CD4-positive, alpha-beta memory T cell (primary cell): ENCODE measurements at regions of chr10 and their contacts with region 1.

Region 1: GRCh38 chr10:102641880-102642735 is 2.2 kb upstream of the TRIM8 start:
- DNase-seq: peak; percentile 91 to 99 (median 95)
- H3K4me3 ChIP-seq: peak overlapping the region; percentile 26 to 78
- H3K4me3 Mint-ChIP-seq: peak overlapping the region; percentile 90 to 97 (median 94)
- H3K27ac ChIP-seq: peak overlapping the region; percentile 94
- H3K27ac Mint-ChIP-seq: peak overlapping the region; percentile 96 to 99 (median 98)
- H3K4me1 ChIP-seq: peaks cover 14% of the 10 kb centered on the region
- H3K4me1 Mint-ChIP-seq: peaks cover 13 to 39% (median 18%) of the 10 kb centered on the region in 4 donors
- H3K27me3 ChIP-seq: no peaks in the 10 kb centered on the region
- H3K27me3 Mint-ChIP-seq: no peaks in the 10 kb centered on the region

Region 2: DNA sequence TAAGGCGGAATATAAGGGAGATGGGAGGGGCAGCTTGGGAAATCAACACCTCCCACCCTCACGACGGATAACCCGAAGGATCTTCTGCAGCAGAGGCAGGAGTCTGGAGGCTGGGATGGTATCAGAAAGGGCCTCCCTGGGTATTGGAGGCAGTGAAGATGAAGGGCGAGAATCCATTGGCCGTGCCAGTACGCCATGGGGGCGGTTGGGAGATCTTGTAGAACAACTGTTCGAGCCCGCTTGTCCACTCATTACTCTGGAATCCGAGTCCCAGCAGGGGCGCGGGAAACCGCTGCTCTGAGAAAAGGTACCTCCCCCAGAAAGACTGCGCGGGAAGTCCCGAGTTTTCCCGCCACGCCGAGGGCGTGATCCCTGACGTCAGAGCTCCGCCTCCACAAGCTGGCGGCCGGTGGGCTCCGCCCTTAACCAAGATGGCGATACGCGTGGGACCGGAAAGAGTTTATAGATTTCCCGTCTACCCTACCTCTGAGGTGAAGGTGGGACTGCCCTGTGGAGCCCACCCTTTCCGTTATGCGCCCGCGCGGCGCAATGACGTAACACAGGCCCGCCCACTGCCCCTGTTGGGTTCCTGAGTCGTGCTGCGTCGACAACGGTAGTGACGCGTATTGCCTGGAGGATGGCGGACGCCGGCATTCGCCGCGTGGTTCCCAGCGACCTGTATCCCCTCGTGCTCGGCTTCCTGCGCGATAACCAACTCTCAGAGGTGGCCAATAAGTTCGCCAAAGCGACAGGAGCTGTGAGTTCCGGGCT is 490.1 kb before region 1 on chr10 and contains the start of gene NOLC1:
- CTCF ChIA-PET with region 1: no interaction called
- POLR2A ChIA-PET with region 1: interaction called, 4 read pairs
- intact Hi-C with region 1: loop called (anchors 5 kb)
- DNase-seq: peak; percentile 99 to 100 (median 100)
- H3K4me3 ChIP-seq: peak within 1 kb of the TSS; percentile 82 to 91
- H3K4me3 Mint-ChIP-seq: peak within 1 kb of the TSS; percentile 91 to 97 (median 94)
- H3K27ac ChIP-seq: peak within 1 kb of the TSS; percentile 87
- H3K27ac Mint-ChIP-seq: peak within 1 kb of the TSS; percentile 91 to 99 (median 97)
- H3K4me1 ChIP-seq: peaks cover 34% of the 10 kb centered on the region
- H3K4me1 Mint-ChIP-seq: peaks cover 21 to 60% (median 42%) of the 10 kb centered on the region in 4 donors
- H3K27me3 ChIP-seq: no peaks in the 10 kb centered on the region
- H3K27me3 Mint-ChIP-seq: no peaks in the 10 kb centered on the region
- total RNA-seq, gene NOLC1: 63.7 to 71.6 TPM

Region 3: DNA sequence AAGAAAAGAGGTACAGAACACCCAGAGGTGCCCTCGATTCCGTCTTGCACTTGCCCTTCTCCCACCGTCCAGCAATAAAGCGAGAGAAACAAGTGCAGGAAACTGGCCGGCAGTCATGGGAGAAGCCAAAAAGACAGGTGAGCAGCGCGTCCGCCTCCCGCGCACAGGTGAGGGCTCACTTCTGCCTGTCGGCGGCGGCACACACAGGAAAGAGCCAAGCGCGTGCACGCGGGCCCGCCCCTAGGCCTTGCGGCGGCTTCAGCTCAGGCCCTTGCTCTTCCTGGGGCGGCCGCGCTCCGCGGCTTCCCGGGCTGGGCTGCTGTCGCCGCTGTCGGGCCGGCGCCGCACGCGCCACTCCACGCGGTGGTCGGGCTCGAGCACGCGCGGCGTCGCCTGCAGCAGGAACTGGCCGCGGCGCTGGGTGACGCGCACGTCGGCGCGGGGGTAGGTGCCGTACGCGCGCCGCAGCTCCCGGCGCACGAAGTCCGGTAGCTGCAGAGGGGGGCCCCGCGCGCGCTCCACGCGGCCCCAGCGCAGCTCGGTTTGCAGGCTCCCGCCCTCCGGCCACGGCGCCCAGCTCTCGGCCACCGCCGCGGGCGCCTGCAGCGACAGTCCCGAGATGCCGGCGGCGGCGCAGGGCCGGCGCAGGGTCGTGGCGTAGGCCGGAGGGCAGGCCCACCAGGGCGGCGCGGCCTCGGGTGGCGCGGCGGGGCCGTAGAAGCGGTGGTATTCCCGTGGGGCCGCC is 191.7 kb before region 1 on chr10:
- CTCF ChIA-PET with region 1: no interaction called
- POLR2A ChIA-PET with region 1: interaction called, 26 read pairs
- intact Hi-C with region 1: no loop called
- DNase-seq: peak; percentile 93 to 96 (median 93)
- H3K4me3 ChIP-seq: peak overlapping the region; percentile 96
- H3K4me3 Mint-ChIP-seq: peak overlapping the region; percentile 90 to 96 (median 94)
- H3K27ac ChIP-seq: peak overlapping the region; percentile 79
- H3K27ac Mint-ChIP-seq: peak overlapping the region; percentile 81 to 97 (median 96)
- H3K4me1 ChIP-seq: peaks cover 23% of the 10 kb centered on the region
- H3K4me1 Mint-ChIP-seq: peaks cover 10 to 31% (median 23%) of the 10 kb centered on the region in 4 donors
- H3K27me3 ChIP-seq: no peaks in the 10 kb centered on the region
- H3K27me3 Mint-ChIP-seq: no peaks in the 10 kb centered on the region

Region 4: DNA sequence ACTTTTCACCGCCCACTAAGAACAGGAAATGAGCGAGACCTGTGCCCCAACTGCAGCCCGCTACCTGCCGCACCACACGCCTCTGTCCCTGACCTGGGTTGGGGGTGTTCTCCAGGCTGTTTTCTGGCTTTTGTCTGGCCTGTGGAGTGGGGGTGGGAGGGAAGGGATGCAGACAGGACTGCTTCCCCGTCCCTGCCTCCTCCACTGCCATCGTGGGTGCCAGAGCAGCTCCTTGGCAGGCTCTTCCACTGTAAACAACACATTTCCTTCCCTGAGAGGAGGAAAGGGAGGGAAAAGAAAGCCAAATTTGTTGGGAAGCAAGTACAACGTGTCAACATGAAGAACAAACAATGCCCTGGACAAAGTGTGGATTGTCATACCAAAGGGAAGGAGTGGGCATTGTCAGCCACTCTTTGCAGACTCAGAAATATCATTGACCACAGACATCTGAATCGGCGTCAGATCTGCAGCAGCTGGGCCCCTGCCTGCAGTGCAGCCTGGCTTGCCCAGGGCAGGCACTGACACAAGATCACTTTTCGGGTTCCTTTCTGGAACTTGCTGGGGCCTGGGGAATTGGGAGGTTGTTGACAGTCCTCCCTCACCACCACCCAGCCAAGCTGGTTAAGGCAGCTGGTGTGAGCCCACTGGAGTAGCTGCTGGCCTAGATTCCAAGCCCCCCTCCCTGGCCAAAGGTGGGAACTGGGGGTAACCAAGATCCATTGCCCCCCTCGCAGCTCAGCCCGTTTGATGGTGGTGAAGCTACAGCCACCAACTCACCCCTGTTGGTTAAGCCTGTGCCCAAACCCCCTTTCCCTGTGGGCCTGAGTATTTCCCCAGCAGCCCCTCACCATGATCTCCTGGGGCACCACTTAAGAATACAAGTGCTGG is 20.4 kb before region 1 on chr10:
- CTCF ChIA-PET with region 1: no interaction called
- POLR2A ChIA-PET with region 1: interaction called, 16 read pairs
- intact Hi-C with region 1: no loop called
- DNase-seq: no peak
- H3K4me3 ChIP-seq: no peak overlapping the region
- H3K4me3 Mint-ChIP-seq: peak overlapping the region in 3 of 8 donors; percentile 36 to 65 (median 62)
- H3K27ac ChIP-seq: no peak overlapping the region
- H3K27ac Mint-ChIP-seq: peak overlapping the region in 4 of 7 donors; percentile 68 to 77 (median 72)
- H3K4me1 ChIP-seq: peaks cover 15% of the 10 kb centered on the region
- H3K4me1 Mint-ChIP-seq: peaks cover 0 to 12% (median 5%) of the 10 kb centered on the region in 4 donors
- H3K27me3 ChIP-seq: no peaks in the 10 kb centered on the region
- H3K27me3 Mint-ChIP-seq: no peaks in the 10 kb centered on the region

Region 5: DNA sequence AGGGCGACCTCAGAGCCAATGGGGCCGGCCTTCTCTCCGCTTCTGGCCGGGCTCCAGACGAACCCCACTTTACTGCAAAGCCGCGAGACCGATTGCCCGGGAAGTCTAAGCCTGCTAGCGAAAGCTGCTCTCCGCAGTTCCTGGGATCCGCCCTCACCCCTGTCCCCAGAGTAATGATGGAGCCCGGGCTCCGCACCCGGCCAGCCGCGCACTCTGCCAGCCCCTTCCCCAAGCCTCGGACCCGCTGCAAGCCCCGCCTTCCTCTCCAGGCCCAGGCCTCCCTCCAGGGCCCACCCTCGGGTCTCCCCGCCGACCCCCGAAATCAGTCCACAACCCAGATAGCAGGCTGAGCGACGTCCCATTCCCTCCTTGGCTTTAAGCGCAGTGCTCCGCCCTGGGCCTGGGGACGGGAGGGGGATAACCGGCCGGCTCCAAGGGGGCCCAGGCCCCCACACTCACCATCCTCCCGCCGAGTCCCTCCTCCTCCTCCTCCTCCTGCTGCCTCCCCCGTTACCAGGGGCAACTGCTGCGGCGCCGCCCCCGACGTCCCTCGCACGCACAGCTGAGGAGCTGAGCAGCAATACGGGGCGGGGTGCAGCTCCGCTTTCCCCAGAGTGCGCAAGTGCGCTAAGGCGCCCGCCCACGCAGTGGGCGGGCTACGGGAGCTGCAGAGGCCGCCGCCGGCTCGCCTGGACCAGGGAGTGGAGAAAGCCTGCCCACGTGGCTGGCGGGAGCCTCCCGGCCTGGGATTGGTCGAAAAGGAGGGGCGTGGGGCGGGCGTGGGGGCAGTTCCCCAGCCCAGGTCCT is 71.9 kb after region 1 on chr10 and contains the start of gene ARL3:
- CTCF ChIA-PET with region 1: interaction called, 21 read pairs
- POLR2A ChIA-PET with region 1: interaction called, 144 read pairs
- intact Hi-C with region 1: loop called (anchors 1 kb)
- DNase-seq: peak; percentile 89 to 97 (median 92)
- H3K4me3 ChIP-seq: peak within 1 kb of the TSS; percentile 81 to 89
- H3K4me3 Mint-ChIP-seq: peak within 1 kb of the TSS; percentile 90 to 98 (median 96)
- H3K27ac ChIP-seq: peak within 1 kb of the TSS; percentile 94
- H3K27ac Mint-ChIP-seq: peak within 1 kb of the TSS; percentile 90 to 98 (median 96)
- H3K4me1 ChIP-seq: peaks cover 33% of the 10 kb centered on the region
- H3K4me1 Mint-ChIP-seq: peaks cover 34 to 67% (median 41%) of the 10 kb centered on the region in 4 donors
- H3K27me3 ChIP-seq: no peaks in the 10 kb centered on the region
- H3K27me3 Mint-ChIP-seq: no peaks in the 10 kb centered on the region
- total RNA-seq, gene ARL3: 3.7 to 4.0 TPM

Region 6: GRCh38 chr10:104121520-104122224 is 1479.6 kb after region 1 on chr10 and contains the start of gene SFR1:
- CTCF ChIA-PET with region 1: no interaction called
- POLR2A ChIA-PET with region 1: no interaction called
- intact Hi-C with region 1: loop called (anchors 10 kb)
- DNase-seq: peak; percentile 99 to 100 (median 99)
- H3K4me3 ChIP-seq: peak within 1 kb of the TSS; percentile 80 to 98
- H3K4me3 Mint-ChIP-seq: peak within 1 kb of the TSS; percentile 94 to 98 (median 96)
- H3K27ac ChIP-seq: peak within 1 kb of the TSS; percentile 100
- H3K27ac Mint-ChIP-seq: peak within 1 kb of the TSS; percentile 99 to 100 (median 100)
- H3K4me1 ChIP-seq: peaks cover 21% of the 10 kb centered on the region
- H3K4me1 Mint-ChIP-seq: peaks cover 9 to 40% (median 20%) of the 10 kb centered on the region in 4 donors
- H3K27me3 ChIP-seq: no peaks in the 10 kb centered on the region
- H3K27me3 Mint-ChIP-seq: peaks cover 0 to 4% of the 10 kb centered on the region in 2 donors
- total RNA-seq, gene SFR1: 12.2 to 12.4 TPM